Ascending aorta (tissue), 2 donors: ENCODE measurements at regions of chr4 and their contacts with region 1.

Region 1: GRCh38 chr4:48963042-48963679 is 22.9 kb upstream of the CWH43 start:
- DNase-seq: peak in 1 of 2 donors; percentile 82
- H3K4me3 ChIP-seq: no peak overlapping the region
- H3K27ac ChIP-seq: no peak overlapping the region
- H3K4me1 ChIP-seq: no peaks in the 10 kb centered on the region
- H3K27me3 ChIP-seq: no peaks in the 10 kb centered on the region
- CTCF ChIP-seq: peak; percentile 91 to 96 (median 96)

Region 2: GRCh38 chr4:48315728-48316630 is 647.2 kb before region 1 on chr4:
- intact Hi-C with region 1: loop called (anchors 10 kb)
- DNase-seq: no peak
- H3K4me3 ChIP-seq: no peak overlapping the region
- H3K27ac ChIP-seq: no peak overlapping the region
- H3K4me1 ChIP-seq: no peaks in the 10 kb centered on the region
- H3K27me3 ChIP-seq: no peaks in the 10 kb centered on the region
- CTCF ChIP-seq: peak; percentile 45 to 61 (median 50)

Region 3: GRCh38 chr4:48445704-48446103 is 517.5 kb before region 1 on chr4:
- intact Hi-C with region 1: loop called (anchors 5 kb)
- DNase-seq: no peak
- H3K4me3 ChIP-seq: no peak overlapping the region
- H3K27ac ChIP-seq: no peak overlapping the region
- H3K4me1 ChIP-seq: no peaks in the 10 kb centered on the region
- H3K27me3 ChIP-seq: no peaks in the 10 kb centered on the region
- CTCF ChIP-seq: peak; percentile 19 to 63 (median 58)

Region 4: DNA sequence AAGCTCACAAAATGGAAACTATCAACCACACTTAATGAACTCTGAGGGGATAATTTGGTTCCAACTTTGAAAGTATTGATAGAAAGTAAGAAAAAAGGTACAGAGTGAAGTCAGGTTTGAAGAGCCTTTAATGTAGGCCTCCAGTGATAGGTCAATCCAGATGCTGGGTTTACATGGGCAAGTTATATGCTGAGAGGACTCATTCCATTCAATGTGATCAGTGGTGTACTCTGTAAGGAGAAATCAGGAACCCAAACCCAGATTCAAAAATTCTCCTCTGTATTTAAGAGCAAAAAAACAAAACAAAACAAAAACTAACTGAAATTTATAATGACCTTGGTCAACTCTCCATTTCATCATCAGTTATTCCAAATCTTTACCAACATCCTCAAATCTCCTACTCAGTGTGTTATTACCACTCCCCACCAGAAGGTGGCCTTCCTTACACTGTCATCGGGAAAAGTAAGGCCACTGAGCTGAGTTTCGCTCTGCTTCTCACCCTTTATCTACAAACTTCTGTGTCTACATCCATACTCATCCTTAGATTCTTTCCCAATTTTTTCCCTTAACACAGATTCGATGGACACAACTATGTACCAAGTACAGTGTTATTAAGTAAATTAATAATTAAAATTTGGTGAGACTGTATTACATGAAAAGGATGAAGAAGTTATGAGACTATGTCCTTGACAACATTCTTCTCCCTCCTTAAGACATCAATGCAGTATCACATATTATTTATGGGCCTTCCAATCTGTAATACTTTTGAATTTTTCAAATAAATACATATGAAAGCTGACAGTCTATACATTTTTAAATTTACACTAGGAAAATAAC is 384.8 kb before region 1 on chr4:
- intact Hi-C with region 1: loop called (anchors 1 kb)
- DNase-seq: peak in 1 of 2 donors; percentile 77
- H3K4me3 ChIP-seq: no peak overlapping the region
- H3K27ac ChIP-seq: no peak overlapping the region
- H3K4me1 ChIP-seq: no peaks in the 10 kb centered on the region
- H3K27me3 ChIP-seq: no peaks in the 10 kb centered on the region
- CTCF ChIP-seq: peak; percentile 70 to 87 (median 70)